ENCODE measurements at regions of chr13 and their contacts with region 1.

Region 1: DNA sequence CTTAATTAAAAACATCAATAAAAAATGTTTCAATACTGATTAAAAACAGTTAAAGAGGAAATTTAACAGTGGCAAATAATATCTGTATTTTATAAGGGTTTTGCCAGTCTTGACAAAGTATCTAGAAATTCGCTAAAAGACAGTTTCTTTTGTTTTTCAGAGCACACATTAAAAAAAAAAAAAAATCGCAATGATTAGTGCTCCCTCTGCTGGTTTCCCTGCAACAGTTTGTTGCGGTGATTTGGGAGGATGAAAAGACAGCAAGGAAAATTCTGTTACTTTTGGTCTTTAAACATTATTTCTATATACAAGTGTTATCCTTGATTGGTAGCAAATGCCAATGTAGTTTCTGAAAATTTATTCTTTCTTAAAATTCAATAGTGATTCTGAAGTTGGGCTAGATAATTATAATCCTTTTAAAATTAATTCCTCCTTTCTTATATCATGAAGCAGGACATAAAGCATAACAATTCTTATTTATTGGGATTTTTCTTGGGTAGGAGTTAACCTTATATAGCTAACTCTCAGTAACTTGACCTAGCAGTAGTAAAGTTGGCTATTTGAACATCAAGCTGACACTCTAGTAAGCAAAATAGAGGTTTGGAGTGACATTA is 23.1 kb upstream of the SPRY2 start:
- ATAC-seq: no peak
- H3K4me3 ChIP-seq: no peak overlapping the region
- H3K27ac ChIP-seq: no peak overlapping the region
- H3K4me1 ChIP-seq: peaks cover 10 to 17% of the 10 kb centered on the region in 2 donors

Region 2: DNA sequence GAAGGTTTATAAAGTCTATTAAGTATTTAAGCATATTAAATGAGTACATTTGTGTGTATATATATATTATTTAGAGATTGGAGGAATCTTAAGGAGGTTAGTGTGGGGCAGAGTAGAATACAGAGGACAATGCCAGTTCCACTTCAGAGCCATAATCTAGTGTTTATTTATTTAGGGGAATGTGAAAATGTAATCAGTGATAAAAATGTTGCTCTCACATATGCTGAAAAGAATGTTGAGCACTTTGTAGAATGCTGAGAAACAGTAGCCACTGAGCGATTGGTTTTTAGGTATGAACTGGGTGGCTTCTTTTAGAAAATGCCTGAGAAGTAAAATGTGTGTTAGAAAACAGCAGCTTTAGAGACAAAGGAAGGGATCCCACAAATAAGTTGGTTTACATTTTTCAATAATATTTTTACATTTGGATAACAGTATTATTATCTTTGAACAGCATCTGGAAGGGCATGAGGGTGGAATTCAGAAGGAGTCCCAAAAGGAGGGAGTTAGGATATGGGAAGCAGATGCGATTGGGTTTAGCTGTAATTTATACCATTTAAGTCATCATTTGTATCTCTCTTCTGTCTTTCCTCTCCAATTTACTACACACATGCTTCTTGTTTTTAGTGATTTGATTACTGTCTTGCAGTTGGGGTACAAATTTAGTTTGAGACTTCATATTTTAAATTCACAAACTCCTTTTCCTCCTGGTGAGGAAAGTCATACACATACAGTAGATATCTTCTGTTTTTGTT is 814.5 kb before region 1 on chr13:
- in situ Hi-C with region 1: loop called in 1 of 9 experiments (anchors 25 kb)
- ATAC-seq: no peak
- H3K4me3 ChIP-seq: no peak overlapping the region
- H3K27ac ChIP-seq: no peak overlapping the region
- H3K4me1 ChIP-seq: no peaks in the 10 kb centered on the region

Region 3: DNA sequence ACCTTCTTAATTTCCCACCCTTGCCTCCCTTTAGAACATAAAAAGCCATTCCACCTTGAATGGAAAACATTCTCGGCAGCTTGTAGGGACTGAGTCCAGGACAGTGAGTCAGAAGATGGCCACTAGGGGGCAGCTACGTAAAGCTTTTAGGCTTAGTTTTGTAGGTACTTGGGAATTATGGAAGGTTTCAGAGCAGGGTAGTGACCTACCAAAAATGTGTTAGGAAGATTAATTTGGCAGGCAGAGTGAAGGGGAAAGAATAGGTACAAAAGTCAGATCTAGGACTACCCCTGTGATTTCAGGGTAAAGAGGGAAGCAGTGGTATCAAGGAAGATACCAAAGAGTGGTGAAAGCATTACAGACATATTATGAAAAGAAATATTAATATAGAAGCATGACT is 684.7 kb before region 1 on chr13:
- in situ Hi-C with region 1: loop called in 3 of 9 experiments (anchors 25 kb)
- ATAC-seq: peak in 4 of 8 experiments; percentile 55 to 89 (median 84)
- H3K4me3 ChIP-seq: no peak overlapping the region
- H3K27ac ChIP-seq: no peak overlapping the region
- H3K4me1 ChIP-seq: no peaks in the 10 kb centered on the region

Region 4: GRCh38 chr13:79775830-79776229 is 588.2 kb before region 1 on chr13:
- in situ Hi-C with region 1: loop called in 1 of 9 experiments (anchors 25 kb)
- ATAC-seq: peak in 5 of 8 experiments; percentile 41 to 74 (median 65)
- H3K4me3 ChIP-seq: no peak overlapping the region
- H3K27ac ChIP-seq: no peak overlapping the region
- H3K4me1 ChIP-seq: no peaks in the 10 kb centered on the region

Region 5: GRCh38 chr13:80082396-80083080 is 281.5 kb before region 1 on chr13:
- in situ Hi-C with region 1: no loop called
- ATAC-seq: no peak
- H3K4me3 ChIP-seq: no peak overlapping the region
- H3K27ac ChIP-seq: no peak overlapping the region
- H3K4me1 ChIP-seq: no peaks in the 10 kb centered on the region

Region 6: GRCh38 chr13:80469853-80470381 is 105.9 kb after region 1 on chr13:
- in situ Hi-C with region 1: no loop called
- ATAC-seq: peak in 7 of 8 experiments; percentile 16 to 92 (median 64)
- H3K4me3 ChIP-seq: no peak overlapping the region
- H3K27ac ChIP-seq: no peak overlapping the region
- H3K4me1 ChIP-seq: peaks cover 5 to 7% of the 10 kb centered on the region in 2 donors